Heart left ventricle (tissue), 16 donors: ENCODE measurements at regions of chr18 and their contacts with region 1.

Region 1: GRCh38 chr18:48073231-48073930 is 142.9 kb upstream of the SMAD2 start:
- DNase-seq: no peak
- ATAC-seq: peak in 3 of 4 donors; percentile 21 to 60 (median 55)
- H3K4me3 ChIP-seq: no peak overlapping the region
- H3K27ac ChIP-seq: peak overlapping the region; percentile 31 to 84 (median 68)
- H3K4me1 ChIP-seq: peaks cover 0 to 26% (median 14%) of the 10 kb centered on the region in 12 donors
- H3K27me3 ChIP-seq: no peaks in the 10 kb centered on the region
- CTCF ChIP-seq: no peak
- POLR2A ChIP-seq: no peak

Region 2: GRCh38 chr18:48059455-48060010 is 13.8 kb before region 1 on chr18:
- intact Hi-C with region 1: no loop called
- DNase-seq: no peak
- ATAC-seq: no peak
- H3K4me3 ChIP-seq: no peak overlapping the region
- H3K27ac ChIP-seq: no peak overlapping the region
- H3K4me1 ChIP-seq: peaks cover 0 to 3% (median 0%) of the 10 kb centered on the region in 12 donors
- H3K27me3 ChIP-seq: peaks cover 0 to 3% (median 0%) of the 10 kb centered on the region in 9 donors
- CTCF ChIP-seq: no peak
- POLR2A ChIP-seq: no peak

Region 3: DNA sequence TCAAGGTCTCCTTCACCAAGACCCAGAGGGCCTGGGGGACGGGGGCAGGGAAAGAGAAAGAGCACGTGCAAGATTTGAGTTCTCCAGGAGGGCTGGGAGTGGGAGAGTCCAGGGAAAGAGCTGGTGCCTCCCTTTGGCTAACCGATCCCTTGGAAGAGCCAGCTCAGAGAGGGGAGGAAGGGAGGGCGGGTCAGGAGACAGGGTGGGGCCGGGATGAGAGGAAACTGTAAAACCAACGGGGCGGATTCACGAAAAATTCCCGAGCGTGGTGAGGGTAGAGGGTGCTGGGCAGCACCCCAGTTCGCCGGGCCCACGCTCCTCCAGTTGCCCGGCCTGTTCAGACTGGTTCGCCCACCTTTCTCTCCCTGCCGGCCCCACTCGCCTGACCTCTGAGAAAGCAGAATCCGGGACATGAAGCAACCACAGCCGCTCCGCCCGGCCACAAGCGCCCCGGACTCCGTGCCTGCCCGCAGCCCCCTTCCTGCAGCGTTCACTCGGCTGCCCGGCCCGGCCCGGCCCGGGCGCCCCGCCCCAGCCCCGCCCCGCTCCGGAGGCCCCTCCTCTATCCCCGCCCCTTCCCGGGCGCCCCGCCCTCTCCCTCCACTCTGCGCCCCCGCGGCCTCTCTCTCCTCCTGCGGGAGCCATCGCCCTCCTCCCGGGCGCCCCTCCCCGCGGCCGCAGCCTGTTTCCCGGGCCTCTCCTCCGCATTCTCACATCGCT is 88.0 kb after region 1 on chr18:
- intact Hi-C with region 1: loop called in 1 of 10 experiments (anchors 5 kb)
- DNase-seq: peak; percentile 86 to 90 (median 89)
- ATAC-seq: peak; percentile 93 to 98 (median 96)
- H3K4me3 ChIP-seq: peak overlapping the region; percentile 41 to 96 (median 68)
- H3K27ac ChIP-seq: peak overlapping the region; percentile 80 to 96 (median 90)
- H3K4me1 ChIP-seq: peaks cover 1 to 43% (median 23%) of the 10 kb centered on the region in 12 donors
- H3K27me3 ChIP-seq: no peaks in the 10 kb centered on the region
- CTCF ChIP-seq: no peak
- POLR2A ChIP-seq: peak in 1 of 2 donors; percentile 52